HCT116 (cell line): ENCODE measurements at regions of chr3 and their contacts with region 1.

Region 1: DNA sequence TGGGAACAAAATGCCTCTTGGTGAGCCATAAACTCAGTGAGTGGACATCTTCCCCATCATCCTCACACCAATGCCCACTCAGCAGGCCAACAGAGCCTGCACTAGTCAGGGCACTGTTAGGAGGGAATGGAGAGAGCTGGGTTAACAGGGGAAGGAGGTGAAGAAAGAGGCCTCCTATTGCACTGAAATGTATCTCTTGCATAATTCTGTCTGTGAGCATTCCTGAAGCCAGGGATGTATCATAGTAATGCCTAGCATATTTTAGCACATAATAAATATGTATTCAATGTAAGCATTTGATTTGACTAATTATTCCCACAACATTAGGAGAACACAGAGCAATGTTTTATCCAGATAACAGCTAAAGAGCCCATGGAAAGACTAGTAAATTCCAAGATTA is 81.2 kb downstream of the ANO10 start:
- DNase-seq: no peak
- ATAC-seq: no peak
- H3K4me3 ChIP-seq: no peak overlapping the region
- H3K27ac ChIP-seq: no peak overlapping the region
- H3K4me1 ChIP-seq: no peaks in the 10 kb centered on the region
- H3K27me3 ChIP-seq: no peaks in the 10 kb centered on the region
- CTCF ChIP-seq: no peak
- POLR2A ChIP-seq: no peak
- RAD21 ChIP-seq: no peak

Region 2: GRCh38 chr3:43742920-43743319 is 202.3 kb after region 1 on chr3:
- CTCF ChIA-PET with region 1: no interaction called
- POLR2A ChIA-PET with region 1: no interaction called
- RAD21 ChIA-PET with region 1: no interaction called
- intact Hi-C with region 1: loop called (anchors 2 kb)
- DNase-seq: no peak
- ATAC-seq: no peak
- H3K4me3 ChIP-seq: no peak overlapping the region
- H3K27ac ChIP-seq: no peak overlapping the region
- H3K4me1 ChIP-seq: peaks cover 0 to 3% of the 10 kb centered on the region in 2 experiments; a peak in 2 of 4 replicates
- H3K27me3 ChIP-seq: no peaks in the 10 kb centered on the region
- CTCF ChIP-seq: peak; percentile 13 to 46 (median 20); a peak in 3 of 6 replicates
- POLR2A ChIP-seq: no peak
- RAD21 ChIP-seq: peak; percentile 60

Region 3: DNA sequence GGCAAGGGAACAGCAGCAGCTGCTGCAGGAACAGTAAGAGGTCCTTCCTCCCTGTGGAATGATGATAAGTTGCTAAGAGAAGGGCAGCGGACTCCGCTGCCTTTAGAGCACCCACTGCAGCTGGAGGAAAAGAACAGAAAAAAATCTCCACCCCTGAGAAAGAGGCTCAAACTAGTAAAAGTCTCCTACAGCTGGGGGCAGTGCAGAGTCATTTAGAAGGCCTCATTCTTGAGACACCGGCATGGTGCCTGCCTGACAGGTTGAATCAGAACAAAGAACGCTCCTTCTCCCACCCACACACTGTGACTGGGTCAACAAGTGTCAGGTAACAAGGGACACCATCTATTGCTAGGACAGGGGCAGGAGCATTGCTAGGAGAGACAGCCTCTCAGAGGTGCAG is 338.5 kb after region 1 on chr3:
- CTCF ChIA-PET with region 1: no interaction called
- POLR2A ChIA-PET with region 1: no interaction called
- RAD21 ChIA-PET with region 1: no interaction called
- intact Hi-C with region 1: loop called (anchors 10 kb)
- DNase-seq: peak; percentile 58
- ATAC-seq: peak; percentile 94
- H3K4me3 ChIP-seq: no peak overlapping the region
- H3K27ac ChIP-seq: no peak overlapping the region
- H3K4me1 ChIP-seq: peaks cover 5 to 20% of the 10 kb centered on the region in 2 experiments; a peak in 3 of 4 replicates
- H3K27me3 ChIP-seq: no peaks in the 10 kb centered on the region
- CTCF ChIP-seq: peak; percentile 58 to 63 (median 59); a peak in 5 of 6 replicates
- POLR2A ChIP-seq: no peak
- RAD21 ChIP-seq: peak; percentile 74

Region 4: DNA sequence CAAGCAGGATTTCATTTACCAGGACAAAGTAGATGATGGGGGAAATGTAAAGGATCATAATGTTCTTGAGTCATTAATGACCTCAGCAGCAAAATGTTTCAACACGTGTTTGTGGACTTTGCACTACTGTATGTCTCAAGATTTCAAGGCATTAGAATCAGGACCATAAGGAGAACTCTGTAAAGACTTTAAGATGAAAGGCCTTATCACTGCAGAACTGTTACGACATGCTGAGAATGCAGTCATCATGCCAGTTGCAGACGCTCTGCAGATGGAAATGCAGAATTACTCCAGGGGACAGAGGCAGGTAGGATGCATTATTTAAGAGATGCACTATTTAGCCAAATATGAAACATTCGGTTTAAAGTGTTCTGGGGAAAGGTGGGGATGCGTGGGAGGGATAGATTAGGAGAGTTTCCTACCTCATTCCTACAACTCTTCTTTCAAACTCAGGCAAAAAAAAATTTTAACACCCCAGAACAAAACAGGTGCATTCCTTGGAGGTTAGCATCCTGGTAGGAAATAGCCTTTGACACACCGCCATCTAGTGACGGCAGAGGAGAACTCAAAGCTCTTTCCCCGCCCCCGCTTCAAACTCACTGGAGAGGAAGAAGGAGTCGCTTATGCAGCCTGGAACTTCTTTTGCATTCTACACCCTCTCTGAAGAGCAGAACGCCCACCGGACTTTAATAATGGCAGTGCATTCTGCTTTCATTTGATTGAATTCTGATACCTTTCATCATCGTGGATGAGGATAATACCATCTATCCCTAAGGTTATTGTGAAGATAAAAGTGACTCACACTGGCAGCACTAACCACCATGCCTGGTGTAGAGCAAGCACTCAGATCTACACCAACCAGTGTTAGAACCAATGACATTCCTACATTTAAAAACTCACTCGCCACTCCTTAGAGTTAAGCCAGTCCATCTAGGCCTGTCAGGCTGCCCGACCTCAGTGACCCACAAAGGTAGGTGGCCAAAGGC is 658.0 kb after region 1 on chr3:
- CTCF ChIA-PET with region 1: no interaction called
- POLR2A ChIA-PET with region 1: no interaction called
- RAD21 ChIA-PET with region 1: no interaction called
- intact Hi-C with region 1: loop called (anchors 1 kb)
- DNase-seq: peak; percentile 56
- ATAC-seq: peak; percentile 94
- H3K4me3 ChIP-seq: no peak overlapping the region
- H3K27ac ChIP-seq: no peak overlapping the region
- H3K4me1 ChIP-seq: peaks cover 0 to 4% of the 10 kb centered on the region in 2 experiments; a peak in 1 of 4 replicates
- H3K27me3 ChIP-seq: 0 out of 2 replicates have a peak, but pooled peaks cover 3% of the 10 kb centered on the region
- CTCF ChIP-seq: peak; percentile 79 to 80 (median 79)
- POLR2A ChIP-seq: no peak
- RAD21 ChIP-seq: peak; percentile 94

Region 5: GRCh38 chr3:44387404-44387803 is 846.8 kb after region 1 on chr3:
- CTCF ChIA-PET with region 1: no interaction called
- POLR2A ChIA-PET with region 1: no interaction called
- RAD21 ChIA-PET with region 1: no interaction called
- intact Hi-C with region 1: no loop called
- DNase-seq: no peak
- ATAC-seq: no peak
- H3K4me3 ChIP-seq: no peak overlapping the region
- H3K27ac ChIP-seq: no peak overlapping the region
- H3K4me1 ChIP-seq: no peaks in the 10 kb centered on the region
- H3K27me3 ChIP-seq: no peaks in the 10 kb centered on the region
- CTCF ChIP-seq: no peak
- POLR2A ChIP-seq: no peak
- RAD21 ChIP-seq: no peak